ENCODE measurements at regions of chr19 and their contacts with region 1.

Region 1: DNA sequence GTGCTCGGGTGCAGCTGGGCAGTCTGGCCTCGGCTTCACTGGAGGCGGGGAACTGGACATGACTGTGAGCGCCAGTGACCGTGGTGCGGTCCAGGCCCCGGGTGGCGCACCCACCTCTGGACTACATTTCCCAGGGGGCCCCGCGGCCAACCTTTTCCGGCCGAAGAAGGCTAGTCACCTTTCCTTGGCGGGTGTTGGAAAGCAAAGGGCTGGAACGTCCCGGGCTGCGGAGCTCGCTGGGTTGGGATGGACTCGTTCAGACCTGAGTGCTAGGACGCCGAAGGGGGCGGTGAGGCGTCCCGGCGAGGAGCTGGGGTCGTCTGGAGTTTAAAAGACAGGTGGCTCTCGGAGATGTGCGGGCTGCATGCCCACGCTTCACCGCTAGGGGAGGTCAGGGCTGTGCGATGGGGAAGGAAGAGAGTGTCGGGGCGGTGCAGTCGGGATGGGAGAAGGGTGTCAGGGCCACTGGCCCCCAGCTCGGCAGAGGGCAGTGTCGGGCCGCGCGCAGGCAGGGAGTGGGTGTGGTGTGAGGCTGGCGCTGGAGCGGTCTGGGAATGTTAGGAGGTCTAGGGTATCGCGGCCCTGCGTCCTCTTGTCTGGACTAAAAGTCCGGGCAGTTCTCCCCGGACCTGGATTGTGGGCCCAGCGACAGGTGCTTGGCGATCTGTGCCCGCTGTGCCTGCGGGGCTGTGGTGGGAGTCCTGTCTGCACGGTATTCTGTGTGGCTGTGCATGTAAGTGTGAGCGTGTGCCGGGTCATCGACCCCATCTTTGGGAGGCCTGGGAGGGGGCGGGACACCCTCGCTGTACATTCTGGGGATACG is 57.1 kb downstream of the ZNF568 start:
- DNase-seq: peak; percentile 86 to 92 (median 88)
- ATAC-seq: peak; percentile 100
- H3K4me3 ChIP-seq: peak overlapping the region; percentile 55 to 63
- H3K27ac ChIP-seq: peak overlapping the region; percentile 54 to 79
- H3K4me1 ChIP-seq: peaks cover 0 to 16% of the 10 kb centered on the region in 2 donors
- H3K27me3 ChIP-seq: no peaks in the 10 kb centered on the region
- CTCF ChIP-seq: peak; percentile 81 to 90

Region 2: GRCh38 chr19:36931684-36932083 is 41.5 kb before region 1 on chr19:
- intact Hi-C with region 1: no loop called
- DNase-seq: no peak
- ATAC-seq: no peak
- H3K4me3 ChIP-seq: no peak overlapping the region
- H3K27ac ChIP-seq: no peak overlapping the region
- H3K4me1 ChIP-seq: no peaks in the 10 kb centered on the region
- H3K27me3 ChIP-seq: no peaks in the 10 kb centered on the region
- CTCF ChIP-seq: no peak

Region 3: DNA sequence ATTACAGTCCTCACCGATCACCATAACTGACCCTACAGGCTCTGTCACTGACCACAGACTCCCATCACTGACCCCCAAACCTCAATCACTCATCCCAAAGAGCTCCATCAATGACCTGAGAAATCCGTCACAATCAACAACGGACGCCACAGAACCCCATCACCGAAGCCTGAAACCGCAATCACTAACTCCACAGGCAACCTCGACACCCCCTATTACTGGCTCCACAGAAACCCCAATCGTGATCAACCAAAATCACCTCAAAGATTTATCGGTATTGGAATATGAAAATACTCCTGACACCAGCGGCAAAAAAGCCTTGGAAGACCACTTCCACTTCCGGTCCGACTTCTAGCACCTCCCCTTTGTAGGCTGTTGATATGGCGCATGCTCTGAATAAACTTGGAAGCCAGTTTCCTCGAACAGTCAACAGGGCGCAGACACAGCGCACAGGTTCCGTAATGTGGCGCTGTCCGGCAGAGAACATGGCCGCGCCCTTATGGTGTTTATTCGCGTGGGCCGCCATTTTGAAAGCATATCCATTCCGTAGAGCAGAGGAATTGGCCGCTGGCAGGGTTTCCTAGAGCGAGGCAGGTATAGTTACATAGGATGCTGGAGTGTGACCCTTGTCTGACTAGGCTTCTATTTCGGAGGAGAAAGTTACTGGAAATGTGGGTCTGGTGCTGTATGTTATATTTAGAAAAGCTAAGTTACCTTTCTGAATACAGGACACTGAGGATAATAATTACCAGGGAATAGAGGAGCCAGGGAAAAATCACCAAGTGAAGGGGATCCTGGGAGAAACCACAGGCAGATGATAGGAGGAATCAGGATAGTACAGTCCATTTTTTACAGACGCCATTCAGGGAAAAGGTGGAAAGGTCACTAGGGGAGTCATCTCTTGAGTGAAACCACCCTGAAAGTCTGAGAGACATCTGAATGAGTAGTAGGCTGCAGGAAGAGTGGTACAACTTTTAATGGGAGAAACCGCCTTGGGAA is 199.4 kb after region 1 on chr19 and contains the start of gene ZNF585A:
- intact Hi-C with region 1: loop called in 1 of 2 experiments (anchors 10 kb)
- DNase-seq: peak; percentile 92 to 98 (median 93)
- ATAC-seq: peak; percentile 100
- H3K4me3 ChIP-seq: peak within 1 kb of the TSS; percentile 57 to 66
- H3K27ac ChIP-seq: peak within 1 kb of the TSS; percentile 63 to 68
- H3K4me1 ChIP-seq: peaks cover 5 to 11% of the 10 kb centered on the region in 2 donors
- H3K27me3 ChIP-seq: no peaks in the 10 kb centered on the region
- CTCF ChIP-seq: no peak
- polyA plus RNA-seq, gene ZNF585A: 13.0 to 17.5 (median 15.6) TPM

Measured in left lung (tissue), 14 donors.